CD8-positive, alpha-beta memory T cell (primary cell): ENCODE measurements at regions of chr5 and their contacts with region 1.

Region 1: GRCh38 chr5:73454351-73455036 is 5.9 kb upstream of the FOXD1 start:
- DNase-seq: peak in 3 of 5 donors; percentile 30 to 58 (median 36)
- H3K4me3 ChIP-seq: no peak overlapping the region
- H3K4me3 Mint-ChIP-seq: peak overlapping the region in 1 of 7 donors; percentile 22
- H3K27ac ChIP-seq: no peak overlapping the region
- H3K27ac Mint-ChIP-seq: peak overlapping the region in 1 of 8 donors; percentile 28
- H3K4me1 ChIP-seq: peaks cover 4% of the 10 kb centered on the region
- H3K4me1 Mint-ChIP-seq: peaks cover 5 to 8% (median 7%) of the 10 kb centered on the region in 3 donors
- H3K27me3 ChIP-seq: peaks cover 56% of the 10 kb centered on the region
- H3K27me3 Mint-ChIP-seq: peaks cover 64 to 80% of the 10 kb centered on the region in 2 donors

Region 2: DNA sequence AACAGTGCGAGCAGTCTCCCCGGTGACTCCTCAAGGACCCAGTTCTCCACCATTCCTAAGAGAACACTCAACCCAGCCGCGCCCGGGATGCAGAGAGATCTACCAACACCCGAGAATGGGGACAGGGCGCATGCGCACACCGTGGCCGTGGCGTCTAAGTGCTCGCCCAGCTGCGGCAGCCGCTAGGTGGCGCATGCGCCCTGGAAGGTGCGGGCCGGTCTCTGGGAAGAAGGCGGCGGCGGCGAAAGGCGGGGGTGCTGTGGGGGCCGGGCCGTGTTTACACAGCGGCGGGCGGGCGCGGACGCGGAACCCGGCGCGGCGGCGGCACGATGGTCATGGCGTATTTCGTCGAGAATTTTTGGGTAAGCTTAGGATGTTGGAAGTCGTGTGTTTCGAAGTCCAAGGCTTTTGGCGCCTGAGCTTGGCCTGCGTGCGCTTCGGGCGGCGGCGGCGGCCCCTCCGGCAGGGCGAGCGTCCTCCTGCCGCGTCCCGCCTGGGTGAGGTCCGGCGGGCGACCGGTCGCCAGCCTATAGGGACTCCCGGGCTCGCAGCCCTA is 498.6 kb before region 1 on chr5 and contains the start of gene FCHO2:
- CTCF ChIA-PET with region 1: interaction called, 12 read pairs
- POLR2A ChIA-PET with region 1: no interaction called
- DNase-seq: peak; percentile 88 to 97 (median 96)
- H3K4me3 ChIP-seq: peak within 1 kb of the TSS; percentile 85
- H3K4me3 Mint-ChIP-seq: peak within 1 kb of the TSS; percentile 86 to 96 (median 95)
- H3K27ac ChIP-seq: peak within 1 kb of the TSS; percentile 74
- H3K27ac Mint-ChIP-seq: peak within 1 kb of the TSS; percentile 61 to 91 (median 84)
- H3K4me1 ChIP-seq: peaks cover 6% of the 10 kb centered on the region
- H3K4me1 Mint-ChIP-seq: peaks cover 16 to 32% (median 18%) of the 10 kb centered on the region in 3 donors
- H3K27me3 ChIP-seq: peaks cover 8% of the 10 kb centered on the region
- H3K27me3 Mint-ChIP-seq: peaks cover 29 to 59% of the 10 kb centered on the region in 2 donors
- total RNA-seq, gene FCHO2: 3.9 to 4.2 TPM

Region 3: GRCh38 chr5:73215891-73216610 is 238.4 kb before region 1 on chr5:
- CTCF ChIA-PET with region 1: interaction called, 36 read pairs
- POLR2A ChIA-PET with region 1: no interaction called
- DNase-seq: peak; percentile 36 to 61 (median 55)
- H3K4me3 ChIP-seq: peak overlapping the region; percentile 20
- H3K4me3 Mint-ChIP-seq: peak overlapping the region in 6 of 7 donors; percentile 47 to 68 (median 66)
- H3K27ac ChIP-seq: no peak overlapping the region
- H3K27ac Mint-ChIP-seq: no peak overlapping the region
- H3K4me1 ChIP-seq: peaks cover 10% of the 10 kb centered on the region
- H3K4me1 Mint-ChIP-seq: peaks cover 12 to 26% (median 21%) of the 10 kb centered on the region in 3 donors
- H3K27me3 ChIP-seq: peaks cover 35% of the 10 kb centered on the region
- H3K27me3 Mint-ChIP-seq: peaks cover 65 to 79% of the 10 kb centered on the region in 2 donors

Region 4: DNA sequence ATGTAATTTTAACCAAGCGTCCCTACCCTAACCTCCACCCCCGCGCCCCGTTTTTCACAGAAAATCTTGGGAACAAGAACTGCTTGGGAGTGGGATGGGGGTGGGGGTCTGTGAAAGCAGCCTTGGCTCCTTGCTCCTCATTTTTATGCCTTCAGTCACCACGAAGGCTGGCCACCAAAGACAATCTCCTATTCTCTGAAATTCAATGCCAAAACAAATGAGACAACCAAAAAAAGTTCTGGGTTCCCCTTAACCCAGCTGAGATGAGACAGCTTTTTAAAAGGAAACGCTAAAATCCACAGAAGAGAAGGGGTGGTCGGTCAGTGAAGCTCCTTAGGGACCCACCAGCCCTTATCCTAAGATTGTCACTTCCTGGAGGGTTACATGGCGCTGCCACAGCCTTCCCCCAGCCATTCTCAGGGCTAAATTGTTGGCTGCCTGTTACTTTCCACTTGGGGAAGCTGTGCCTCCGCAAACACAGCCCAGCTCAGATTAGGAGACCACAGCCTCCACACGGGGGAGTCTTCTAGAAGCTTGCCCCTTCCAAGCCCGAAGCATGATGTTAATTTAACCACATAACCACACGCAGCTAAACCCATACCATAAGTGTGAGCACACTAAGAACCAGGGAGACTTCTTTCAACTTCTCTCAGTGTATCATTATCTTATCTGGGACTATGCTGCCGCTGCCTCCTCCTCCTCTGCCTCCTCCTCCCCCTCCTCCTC is 142.2 kb before region 1 on chr5:
- CTCF ChIA-PET with region 1: interaction called, 22 read pairs
- POLR2A ChIA-PET with region 1: no interaction called
- DNase-seq: peak in 3 of 5 donors; percentile 8 to 66 (median 31)
- H3K4me3 ChIP-seq: no peak overlapping the region
- H3K4me3 Mint-ChIP-seq: peak overlapping the region in 1 of 7 donors; percentile 46
- H3K27ac ChIP-seq: no peak overlapping the region
- H3K27ac Mint-ChIP-seq: no peak overlapping the region
- H3K4me1 ChIP-seq: no peaks in the 10 kb centered on the region
- H3K4me1 Mint-ChIP-seq: peaks cover 10 to 20% (median 17%) of the 10 kb centered on the region in 3 donors
- H3K27me3 ChIP-seq: peaks cover 35% of the 10 kb centered on the region
- H3K27me3 Mint-ChIP-seq: peaks cover 66 to 90% of the 10 kb centered on the region in 2 donors

Region 5: GRCh38 chr5:73442996-73443627 is 11.4 kb before region 1 on chr5:
- CTCF ChIA-PET with region 1: interaction called, 18 read pairs
- POLR2A ChIA-PET with region 1: interaction called, 4 read pairs
- DNase-seq: no peak
- H3K4me3 ChIP-seq: no peak overlapping the region
- H3K4me3 Mint-ChIP-seq: peak overlapping the region in 1 of 7 donors; percentile 65
- H3K27ac ChIP-seq: no peak overlapping the region
- H3K27ac Mint-ChIP-seq: peak overlapping the region in 2 of 8 donors; percentile 48 to 79
- H3K4me1 ChIP-seq: peaks cover 4% of the 10 kb centered on the region
- H3K4me1 Mint-ChIP-seq: peaks cover under 1 to 15% (median 8%) of the 10 kb centered on the region in 3 donors
- H3K27me3 ChIP-seq: peaks cover 82% of the 10 kb centered on the region
- H3K27me3 Mint-ChIP-seq: peaks cover 84 to 85% of the 10 kb centered on the region in 2 donors